ENCODE measurements at regions of chr3 and their contacts with region 1.

Region 1: DNA sequence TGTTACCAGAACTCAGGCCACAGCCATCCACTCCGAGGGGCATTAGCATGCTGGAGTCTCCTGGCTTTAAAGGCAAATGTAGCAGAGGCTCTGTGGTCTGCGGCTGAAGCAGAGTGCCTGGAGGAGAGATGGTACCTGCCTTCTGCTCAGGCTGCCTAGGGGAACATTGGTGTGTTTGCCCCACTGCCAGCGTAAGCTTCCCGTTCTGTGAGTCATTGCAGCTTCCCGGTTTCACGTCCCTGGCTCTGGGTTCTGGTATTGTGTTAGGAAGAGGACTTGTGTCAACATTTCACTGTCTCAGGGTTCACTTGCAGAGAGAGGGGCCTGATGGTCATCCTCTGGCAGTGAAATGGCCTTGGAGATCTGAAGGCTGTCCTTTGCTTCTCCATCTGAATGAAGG is 1.8 kb downstream of the GASK1A start:
- DNase-seq: no peak
- H3K4me3 ChIP-seq: peak overlapping the region in 34 of 59 donors; percentile 10 to 82 (median 70)
- H3K27ac ChIP-seq: peak overlapping the region in 8 of 59 donors; percentile 6 to 51 (median 28)
- H3K27me3 ChIP-seq: peaks cover 0 to 19% (median 0%) of the 10 kb centered on the region in 45 donors
- CTCF ChIP-seq: no peak

Region 2: GRCh38 chr3:43094851-43095250 is 113.9 kb after region 1 on chr3:
- intact Hi-C with region 1: loop called in 1 of 2 experiments (anchors 10 kb)
- DNase-seq: no peak
- H3K4me3 ChIP-seq: no peak overlapping the region
- H3K27ac ChIP-seq: peak overlapping the region in 49 of 59 donors; percentile 4 to 86 (median 62)
- H3K27me3 ChIP-seq: no peaks in the 10 kb centered on the region
- CTCF ChIP-seq: no peak

Measured in dorsolateral prefrontal cortex (tissue), 120 donors.